Heart right ventricle (tissue), 16 donors: ENCODE measurements at regions of chr1 and their contacts with region 1.

Region 1: GRCh38 chr1:91500756-91501522 is at the start of gene CDC7:
- DNase-seq: peak; percentile 92
- ATAC-seq: peak; percentile 95 to 99 (median 97)
- H3K4me3 ChIP-seq: peak within 1 kb of the TSS; percentile 46 to 75 (median 64)
- H3K27ac ChIP-seq: peak within 1 kb of the TSS; percentile 9 to 92 (median 82)
- H3K4me1 ChIP-seq: peaks cover 0 to 38% (median 15%) of the 10 kb centered on the region in 9 donors
- H3K27me3 ChIP-seq: no peaks in the 10 kb centered on the region
- CTCF ChIP-seq: peak in 8 of 9 donors; percentile 12 to 63 (median 50)
- total RNA-seq, gene CDC7: 0.26 to 4.0 (median 0.73) TPM

Region 2: DNA sequence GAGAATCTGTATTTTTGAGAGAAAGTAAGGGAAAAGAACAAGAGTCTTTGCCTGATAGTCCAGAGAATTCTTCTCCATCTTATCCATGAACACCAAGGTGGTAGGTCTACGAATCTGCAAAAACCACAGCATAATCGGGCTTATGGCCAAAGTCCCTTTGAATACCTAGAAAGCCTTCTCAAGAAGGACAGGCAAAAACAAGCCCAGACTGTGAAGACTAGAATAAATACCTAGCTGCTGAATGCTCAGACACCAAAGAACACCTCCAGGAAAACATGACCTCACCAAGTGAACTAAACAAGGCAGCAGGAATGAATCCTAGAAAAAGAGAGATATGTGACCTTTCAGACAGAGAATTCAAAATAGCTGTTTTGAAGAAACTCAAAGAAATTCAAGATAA is 175.5 kb before region 1 on chr1:
- intact Hi-C with region 1: no loop called
- DNase-seq: no peak
- ATAC-seq: no peak
- H3K4me3 ChIP-seq: no peak overlapping the region
- H3K27ac ChIP-seq: no peak overlapping the region
- H3K4me1 ChIP-seq: no peaks in the 10 kb centered on the region
- H3K27me3 ChIP-seq: no peaks in the 10 kb centered on the region
- CTCF ChIP-seq: no peak

Region 3: GRCh38 chr1:91404151-91405012 is 96.6 kb before region 1 on chr1 and contains the start of gene HFM1:
- intact Hi-C with region 1: loop called in 4 of 10 experiments (anchors 5 to 10 kb)
- DNase-seq: peak; percentile 83 to 86
- ATAC-seq: peak; percentile 98 to 100 (median 99)
- H3K4me3 ChIP-seq: peak within 1 kb of the TSS; percentile 36 to 78 (median 63)
- H3K27ac ChIP-seq: peak within 1 kb of the TSS; percentile 24 to 95 (median 88)
- H3K4me1 ChIP-seq: peaks cover 0 to 20% (median 13%) of the 10 kb centered on the region in 9 donors
- H3K27me3 ChIP-seq: peaks cover 0 to 36% (median 0%) of the 10 kb centered on the region in 7 donors
- CTCF ChIP-seq: peak in 6 of 9 donors; percentile 12 to 48 (median 26)
- total RNA-seq, gene HFM1: 1.2 to 4.3 (median 2.9) TPM

Region 4: GRCh38 chr1:91440845-91441244 is 60.1 kb before region 1 on chr1:
- intact Hi-C with region 1: loop called in 1 of 10 experiments (anchors 10 kb)
- DNase-seq: no peak
- ATAC-seq: no peak
- H3K4me3 ChIP-seq: no peak overlapping the region
- H3K27ac ChIP-seq: no peak overlapping the region
- H3K4me1 ChIP-seq: no peaks in the 10 kb centered on the region
- H3K27me3 ChIP-seq: peaks cover 0 to 7% (median 0%) of the 10 kb centered on the region in 7 donors
- CTCF ChIP-seq: peak in 2 of 9 donors; percentile 29 to 33

Region 5: DNA sequence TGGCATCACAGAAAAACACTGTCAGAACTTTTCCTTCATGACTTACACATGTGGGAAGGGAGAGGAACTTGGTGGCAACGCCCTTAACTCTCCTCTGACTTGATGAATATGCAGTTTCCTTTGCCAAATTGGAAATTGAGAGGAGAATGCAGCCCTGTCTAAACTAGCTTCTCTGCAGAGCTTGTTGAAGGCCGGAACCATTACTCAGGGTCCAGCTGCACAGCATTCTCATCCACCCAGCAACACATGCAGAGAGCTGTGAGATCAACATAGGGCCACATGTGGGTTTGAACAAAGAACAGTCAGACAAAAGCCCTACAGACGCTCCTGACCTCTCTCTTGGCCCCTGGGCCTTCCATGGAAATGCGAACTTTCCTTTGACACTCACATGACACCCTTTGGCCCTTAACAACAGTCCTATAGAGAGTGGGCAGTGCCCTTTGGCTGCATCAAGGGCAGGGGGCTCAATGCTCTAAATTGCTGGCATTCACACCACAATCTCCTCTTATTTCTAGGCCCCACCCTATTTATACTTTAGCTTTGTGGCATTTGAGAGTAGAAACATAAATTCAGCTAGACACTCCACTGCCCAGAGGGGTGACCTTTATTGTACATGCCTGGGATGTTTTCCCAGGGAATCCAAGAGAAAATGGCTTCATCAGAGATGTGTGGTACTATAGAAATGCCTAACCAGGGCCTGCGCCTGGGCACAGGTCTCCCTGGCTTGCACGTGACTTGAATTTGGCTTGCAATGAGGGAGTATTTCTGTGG is 64.1 kb after region 1 on chr1:
- intact Hi-C with region 1: no loop called
- DNase-seq: no peak
- ATAC-seq: peak in 7 of 8 donors; percentile 10 to 84 (median 38)
- H3K4me3 ChIP-seq: no peak overlapping the region
- H3K27ac ChIP-seq: peak overlapping the region in 5 of 10 donors; percentile 8 to 49 (median 25)
- H3K4me1 ChIP-seq: peaks cover 0 to 25% (median 16%) of the 10 kb centered on the region in 9 donors
- H3K27me3 ChIP-seq: no peaks in the 10 kb centered on the region
- CTCF ChIP-seq: no peak